IMR-90 (cell line): ENCODE measurements at regions of chr4 and their contacts with region 1.

Region 1: DNA sequence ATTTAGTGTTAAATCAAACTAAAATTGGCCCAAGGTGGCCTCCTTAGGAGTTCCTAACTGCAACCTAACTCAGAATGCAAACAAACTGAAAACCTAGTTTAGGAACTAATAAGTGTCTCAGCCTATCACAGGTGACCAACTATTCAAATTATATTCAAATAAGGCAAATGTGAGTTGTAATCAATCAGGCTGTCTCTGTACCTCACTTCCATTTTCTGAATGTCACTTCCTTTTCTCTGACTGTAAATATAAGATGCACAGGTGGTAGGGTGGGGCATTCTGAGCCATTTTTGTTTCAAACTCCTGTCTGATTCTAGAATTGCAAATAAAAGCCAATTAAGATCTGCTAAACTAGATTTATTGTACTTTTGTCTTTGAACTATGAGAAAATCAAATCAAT is 401.5 kb downstream of the PPP3CA start:
- DNase-seq: no peak
- ATAC-seq: no peak
- H3K4me3 ChIP-seq: no peak overlapping the region
- H3K27ac ChIP-seq: no peak overlapping the region
- H3K4me1 ChIP-seq: no peaks in the 10 kb centered on the region
- H3K27me3 ChIP-seq: no peaks in the 10 kb centered on the region
- CTCF ChIP-seq: no peak
- POLR2A ChIP-seq: no peak
- RAD21 ChIP-seq: no peak

Region 2: DNA sequence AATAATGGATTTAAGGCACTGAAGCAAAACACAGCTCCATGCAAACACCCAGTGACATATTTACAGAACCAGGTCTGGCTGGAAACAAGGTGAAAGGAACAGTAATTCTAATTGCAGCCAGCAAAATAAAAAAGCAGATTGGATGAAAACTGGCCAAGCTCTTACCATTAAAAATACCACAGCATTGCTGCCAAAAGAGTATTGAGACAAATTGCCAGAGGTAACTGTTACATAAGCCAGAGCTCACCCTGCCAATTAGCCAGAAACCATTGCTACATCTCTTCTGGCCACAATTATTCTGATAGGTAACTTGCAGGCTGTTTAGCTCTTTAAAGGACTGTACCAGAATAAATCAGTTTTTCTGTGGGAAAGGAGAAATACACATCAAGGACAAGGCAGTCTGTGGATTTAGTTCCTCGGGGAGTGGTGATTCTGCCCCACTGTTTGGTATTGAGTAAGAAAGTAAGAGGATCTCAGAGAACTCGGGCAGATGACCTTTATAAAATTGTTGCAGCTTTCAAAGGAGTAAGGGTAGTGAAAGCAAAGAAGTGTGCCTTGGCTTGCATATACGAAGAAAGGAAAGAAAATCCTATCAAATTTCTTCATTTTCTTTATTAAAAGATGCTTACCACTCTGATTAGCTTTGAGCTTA is 32.1 kb after region 1 on chr4:
- CTCF ChIA-PET with region 1: no interaction called
- POLR2A ChIA-PET with region 1: no interaction called
- dilution Hi-C with region 1: no loop called
- in situ Hi-C with region 1: no loop called
- intact Hi-C with region 1: loop called (anchors 1 kb)
- DNase-seq: no peak
- ATAC-seq: no peak
- H3K4me3 ChIP-seq: no peak overlapping the region
- H3K27ac ChIP-seq: no peak overlapping the region
- H3K4me1 ChIP-seq: no peaks in the 10 kb centered on the region
- H3K27me3 ChIP-seq: peaks cover 2% of the 10 kb centered on the region; the same call in 1 of the 2 replicates
- CTCF ChIP-seq: no peak
- POLR2A ChIP-seq: no peak
- RAD21 ChIP-seq: no peak

Region 3: DNA sequence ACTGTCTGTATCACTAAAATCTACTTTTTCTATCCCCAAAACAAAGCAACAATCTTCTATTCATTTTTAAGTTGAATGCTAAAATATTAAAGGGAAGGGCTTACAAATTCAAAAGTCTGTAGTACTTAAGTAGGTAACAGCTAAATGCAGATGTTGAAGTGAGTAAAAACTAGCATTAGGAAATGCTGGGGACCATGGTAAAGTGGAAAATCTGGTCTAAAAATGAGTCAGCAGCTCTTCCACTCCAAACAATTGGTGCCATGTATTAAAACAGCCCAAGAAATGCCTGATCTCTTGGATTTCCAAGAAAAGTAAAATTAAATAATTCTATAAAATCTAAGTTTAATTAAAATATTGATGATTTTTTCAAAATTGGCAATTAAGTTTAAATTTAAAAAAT is 474.9 kb after region 1 on chr4:
- CTCF ChIA-PET with region 1: no interaction called
- POLR2A ChIA-PET with region 1: no interaction called
- dilution Hi-C with region 1: no loop called
- in situ Hi-C with region 1: no loop called
- intact Hi-C with region 1: no loop called
- DNase-seq: peak; percentile 6
- ATAC-seq: no peak
- H3K4me3 ChIP-seq: no peak overlapping the region
- H3K27ac ChIP-seq: no peak overlapping the region
- H3K4me1 ChIP-seq: no peaks in the 10 kb centered on the region
- H3K27me3 ChIP-seq: no peaks in the 10 kb centered on the region
- CTCF ChIP-seq: no peak
- POLR2A ChIP-seq: no peak
- RAD21 ChIP-seq: no peak